Motor neuron (in vitro differentiated cells): ENCODE measurements at regions of chr19 and their contacts with region 1.

Region 1: GRCh38 chr19:53808710-53809125 is 15.4 kb downstream of the NLRP12 start:
- ATAC-seq: peak in 7 of 8 experiments; percentile 38 to 63 (median 57)
- H3K4me3 ChIP-seq: no peak overlapping the region
- H3K27ac ChIP-seq: no peak overlapping the region
- H3K4me1 ChIP-seq: no peaks in the 10 kb centered on the region

Region 2: DNA sequence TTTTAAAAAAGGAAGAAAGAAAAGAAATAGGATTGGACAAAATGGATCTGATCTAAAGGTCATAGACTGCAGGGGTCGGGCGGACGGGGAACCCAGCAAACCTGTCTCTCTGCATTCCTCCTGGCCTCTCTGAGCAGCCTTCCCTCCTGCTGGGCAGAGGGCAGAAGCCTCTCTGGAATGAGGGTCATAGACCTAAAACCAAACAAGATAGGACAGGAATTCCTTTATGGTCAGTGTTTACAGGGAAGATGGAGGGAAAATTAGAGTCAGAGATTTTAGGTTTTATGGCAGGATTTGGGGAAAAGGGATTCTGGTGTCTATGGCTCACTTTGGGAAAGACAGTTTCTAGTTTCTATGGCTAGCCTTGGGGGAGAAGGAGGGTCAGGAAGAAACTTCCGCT is 196.0 kb before region 1 on chr19:
- in situ Hi-C with region 1: no loop called
- ATAC-seq: no peak
- H3K4me3 ChIP-seq: no peak overlapping the region
- H3K27ac ChIP-seq: no peak overlapping the region
- H3K4me1 ChIP-seq: no peaks in the 10 kb centered on the region

Region 3: GRCh38 chr19:53634776-53635175 is 173.9 kb before region 1 on chr19:
- in situ Hi-C with region 1: no loop called
- ATAC-seq: no peak
- H3K4me3 ChIP-seq: no peak overlapping the region
- H3K27ac ChIP-seq: no peak overlapping the region
- H3K4me1 ChIP-seq: no peaks in the 10 kb centered on the region

Region 4: GRCh38 chr19:53730390-53730789 is 78.3 kb before region 1 on chr19:
- in situ Hi-C with region 1: no loop called
- ATAC-seq: no peak
- H3K4me3 ChIP-seq: no peak overlapping the region
- H3K27ac ChIP-seq: no peak overlapping the region
- H3K4me1 ChIP-seq: no peaks in the 10 kb centered on the region

Region 5: GRCh38 chr19:54017261-54017660 is 208.5 kb after region 1 on chr19:
- in situ Hi-C with region 1: loop called in 1 of 9 experiments (anchors 25 kb)
- ATAC-seq: peak in 3 of 8 experiments; percentile 7 to 45 (median 24)
- H3K4me3 ChIP-seq: no peak overlapping the region
- H3K27ac ChIP-seq: no peak overlapping the region
- H3K4me1 ChIP-seq: peaks cover 0 to 6% of the 10 kb centered on the region in 2 donors

Region 6: DNA sequence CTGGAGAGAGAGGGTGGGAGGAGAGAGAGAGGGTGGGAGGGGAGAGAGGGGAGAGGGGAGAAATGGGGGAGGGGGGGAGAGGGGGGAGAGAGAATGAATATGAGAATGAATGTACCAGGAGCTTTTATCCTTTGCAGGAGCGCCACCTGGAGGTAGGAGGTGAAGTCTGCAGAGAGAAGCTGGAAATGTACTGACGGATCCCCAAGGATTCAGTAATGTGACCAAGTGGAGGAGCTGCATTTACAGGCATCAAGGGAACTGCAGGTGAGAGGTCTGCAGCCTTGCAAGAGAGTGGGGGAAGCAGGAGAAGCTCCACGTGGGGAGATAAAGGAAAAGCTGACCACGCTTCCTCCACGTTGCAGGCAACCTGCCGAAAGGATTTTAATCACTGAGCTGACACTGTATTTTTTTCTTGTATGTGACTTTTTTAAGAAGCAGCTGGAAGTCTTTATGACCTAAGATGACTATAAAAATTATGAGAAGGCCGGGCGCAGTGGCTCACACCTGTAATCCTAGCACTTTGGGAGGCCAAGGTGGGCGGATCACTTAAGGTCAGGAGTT is 221.3 kb after region 1 on chr19:
- in situ Hi-C with region 1: loop called in 1 of 9 experiments (anchors 25 kb)
- ATAC-seq: peak in 3 of 8 experiments; percentile 42 to 70 (median 49)
- H3K4me3 ChIP-seq: no peak overlapping the region
- H3K27ac ChIP-seq: no peak overlapping the region
- H3K4me1 ChIP-seq: no peaks in the 10 kb centered on the region